GM12878 (cell line): ENCODE measurements at regions of chr10 and their contacts with region 1.

Region 1: GRCh38 chr10:80260295-80261243 is 28.9 kb downstream of the MAT1A start:
- DNase-seq: no peak
- ATAC-seq: peak; percentile 74
- H3K4me3 ChIP-seq: no peak overlapping the region
- H3K27ac ChIP-seq: no peak overlapping the region
- H3K4me1 ChIP-seq: no peaks in the 10 kb centered on the region
- H3K27me3 ChIP-seq: peaks cover 0 to 3% of the 10 kb centered on the region in 2 experiments; a peak in 1 of 4 replicates
- CTCF ChIP-seq: peak; percentile 83 to 94 (median 85)
- EP300 ChIP-seq: no peak
- POLR2A ChIP-seq: no peak
- RAD21 ChIP-seq: peak; percentile 71

Region 2: DNA sequence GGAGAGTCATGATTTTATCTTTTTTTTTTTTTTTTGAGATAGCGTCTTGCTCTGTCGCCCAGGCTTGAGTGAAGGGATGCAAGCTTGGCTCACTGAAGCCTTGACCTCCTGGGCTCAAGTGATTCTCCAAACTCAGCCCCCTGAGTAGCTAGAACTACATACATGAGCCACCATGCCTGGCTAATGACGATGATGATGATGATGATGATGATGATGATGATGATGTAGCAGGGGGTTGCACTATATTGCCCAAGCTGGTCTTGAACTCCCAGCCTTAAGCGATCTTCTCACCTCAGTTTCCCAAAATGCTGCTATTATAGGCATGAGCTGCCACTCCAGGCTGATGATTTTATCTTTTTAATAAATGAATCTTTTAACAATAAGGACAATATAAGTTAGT is 141.9 kb before region 1 on chr10:
- CTCF ChIA-PET with region 1: interaction called, 10 read pairs
- POLR2A ChIA-PET with region 1: no interaction called
- RAD21 ChIA-PET with region 1: no interaction called
- SMC1A ChIA-PET with region 1: no interaction called
- in situ Hi-C with region 1: no loop called
- intact Hi-C with region 1: no loop called
- DNase-seq: no peak
- ATAC-seq: no peak
- H3K4me3 ChIP-seq: no peak overlapping the region
- H3K27ac ChIP-seq: no peak overlapping the region
- H3K4me1 ChIP-seq: no peaks in the 10 kb centered on the region
- H3K27me3 ChIP-seq: peaks cover 0 to 5% of the 10 kb centered on the region in 2 experiments; a peak in 1 of 4 replicates
- CTCF ChIP-seq: no peak
- EP300 ChIP-seq: no peak
- POLR2A ChIP-seq: no peak
- RAD21 ChIP-seq: no peak